Colonic mucosa (tissue), 4 donors: ENCODE measurements at regions of chr11 and their contacts with region 1.

Region 1: DNA sequence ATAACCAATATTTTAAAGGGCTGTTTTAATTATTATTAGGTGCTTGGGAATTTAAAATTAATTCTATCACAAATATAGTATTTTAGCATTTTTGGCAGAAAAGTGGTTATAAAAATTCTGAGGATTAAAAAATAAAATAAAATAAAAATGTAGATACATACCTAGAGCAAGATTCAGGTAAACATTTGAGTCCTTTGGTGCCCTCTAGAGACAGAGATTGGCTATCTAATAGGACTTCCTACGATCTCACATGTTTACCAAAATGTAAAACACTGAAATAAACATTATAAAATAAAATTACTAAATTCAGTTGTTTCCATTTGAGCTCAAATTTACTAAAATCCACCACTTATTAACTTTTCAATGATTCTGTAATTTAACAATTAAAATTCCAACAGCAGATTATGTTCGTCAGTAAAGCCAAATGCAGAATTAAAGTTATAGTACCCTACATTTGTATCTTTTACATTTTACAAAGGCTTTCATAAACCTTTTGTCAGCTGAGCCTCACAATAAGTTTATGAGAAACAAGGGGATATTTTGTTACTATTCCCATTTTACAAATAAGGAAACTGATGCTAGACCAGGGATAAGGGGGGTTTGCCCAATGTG is 27.7 kb downstream of the SLC36A4 start:
- DNase-seq: no peak
- H3K4me3 ChIP-seq: no peak overlapping the region
- H3K27ac ChIP-seq: no peak overlapping the region
- H3K4me1 ChIP-seq: no peaks in the 10 kb centered on the region
- H3K27me3 ChIP-seq: no peaks in the 10 kb centered on the region
- CTCF ChIP-seq: peak; percentile 42

Region 2: GRCh38 chr11:92804388-92804966 is 365.6 kb before region 1 on chr11:
- intact Hi-C with region 1: no loop called
- DNase-seq: no peak
- H3K4me3 ChIP-seq: no peak overlapping the region
- H3K27ac ChIP-seq: no peak overlapping the region
- H3K4me1 ChIP-seq: no peaks in the 10 kb centered on the region
- H3K27me3 ChIP-seq: no peaks in the 10 kb centered on the region
- CTCF ChIP-seq: no peak

Region 3: GRCh38 chr11:92941676-92942571 is 228.1 kb before region 1 on chr11:
- intact Hi-C with region 1: loop called (anchors 5 kb)
- DNase-seq: peak; percentile 24
- H3K4me3 ChIP-seq: no peak overlapping the region
- H3K27ac ChIP-seq: no peak overlapping the region
- H3K4me1 ChIP-seq: no peaks in the 10 kb centered on the region
- H3K27me3 ChIP-seq: no peaks in the 10 kb centered on the region
- CTCF ChIP-seq: peak; percentile 55

Region 4: GRCh38 chr11:93089474-93090102 is 80.5 kb before region 1 on chr11:
- intact Hi-C with region 1: loop called (anchors 10 kb)
- DNase-seq: peak; percentile 38
- H3K4me3 ChIP-seq: no peak overlapping the region
- H3K27ac ChIP-seq: no peak overlapping the region
- H3K4me1 ChIP-seq: no peaks in the 10 kb centered on the region
- H3K27me3 ChIP-seq: no peaks in the 10 kb centered on the region
- CTCF ChIP-seq: peak; percentile 29